ENCODE measurements at regions of chr3 and their contacts with region 1.

Region 1: GRCh38 chr3:56248021-56248420 is 220.2 kb downstream of the ERC2 start:
- DNase-seq: no peak
- H3K4me3 ChIP-seq: no peak overlapping the region
- H3K27ac ChIP-seq: no peak overlapping the region
- H3K4me1 ChIP-seq: no peaks in the 10 kb centered on the region
- H3K27me3 ChIP-seq: no peaks in the 10 kb centered on the region
- CTCF ChIP-seq: no peak

Region 2: DNA sequence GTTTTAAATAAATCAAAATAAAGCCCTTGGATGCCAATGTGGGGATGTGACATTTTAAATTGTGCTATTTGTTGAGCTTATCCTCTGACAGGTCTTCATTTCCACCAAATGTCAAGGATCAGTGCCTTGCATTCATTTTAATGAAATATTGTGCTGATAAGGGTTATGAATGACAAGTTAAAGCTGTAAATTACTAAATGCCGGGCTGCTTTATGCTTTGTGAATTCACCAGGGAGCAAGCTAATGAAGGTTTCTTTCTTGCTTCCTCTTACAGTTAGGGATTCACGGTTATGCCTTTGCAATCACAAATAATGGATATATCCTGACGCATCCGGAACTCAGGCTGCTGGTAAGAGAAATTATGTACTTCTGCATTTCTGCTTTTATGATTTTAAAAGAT is 1401.9 kb before region 1 on chr3:
- intact Hi-C with region 1: loop called (anchors 10 kb)
- DNase-seq: no peak
- H3K4me3 ChIP-seq: no peak overlapping the region
- H3K27ac ChIP-seq: no peak overlapping the region
- H3K4me1 ChIP-seq: peaks cover 0 to 2% (median 0%) of the 10 kb centered on the region in 3 donors
- H3K27me3 ChIP-seq: no peaks in the 10 kb centered on the region
- CTCF ChIP-seq: no peak

Region 3: DNA sequence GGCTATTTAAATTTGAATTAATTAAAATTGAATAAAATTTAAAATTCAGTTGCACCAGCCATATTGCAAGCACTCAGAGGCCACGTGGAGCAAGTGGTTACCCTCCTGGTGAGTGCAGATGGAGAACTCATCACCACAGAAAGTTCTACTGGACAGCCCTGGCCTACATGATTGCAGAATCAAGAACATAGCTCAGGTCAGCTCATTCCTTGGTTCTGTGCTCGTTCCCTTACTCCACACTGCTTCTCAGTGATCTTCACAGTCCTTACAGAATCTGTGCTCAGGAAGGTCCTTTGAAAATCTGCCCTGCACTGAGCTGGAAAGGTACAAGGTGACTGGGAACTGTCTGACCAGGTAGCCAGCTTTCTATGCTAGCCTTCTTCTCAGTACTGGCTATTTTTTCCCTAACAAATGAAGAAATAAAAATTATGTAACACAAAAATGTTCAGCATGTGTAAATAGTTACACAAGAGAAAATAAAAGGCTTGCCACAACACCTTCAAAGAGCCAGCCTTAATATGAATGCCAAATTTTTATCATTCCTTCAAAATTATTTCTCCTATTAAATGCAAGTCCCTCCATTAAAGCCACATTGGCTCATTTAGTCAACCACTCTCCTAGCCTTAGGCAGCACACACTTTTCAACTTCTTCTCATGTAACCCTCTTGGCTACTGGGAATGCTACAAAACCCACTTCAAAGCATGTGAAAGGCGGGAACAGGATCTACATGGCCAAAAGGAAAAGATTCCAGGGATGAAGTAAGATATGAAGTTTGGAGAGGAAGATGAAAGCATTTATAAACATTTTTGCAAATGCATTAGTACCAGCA is 434.5 kb before region 1 on chr3:
- intact Hi-C with region 1: no loop called
- DNase-seq: no peak
- H3K4me3 ChIP-seq: no peak overlapping the region
- H3K27ac ChIP-seq: no peak overlapping the region
- H3K4me1 ChIP-seq: no peaks in the 10 kb centered on the region
- H3K27me3 ChIP-seq: no peaks in the 10 kb centered on the region
- CTCF ChIP-seq: no peak

Region 4: GRCh38 chr3:56005196-56005805 is 242.7 kb before region 1 on chr3:
- intact Hi-C with region 1: no loop called
- DNase-seq: no peak
- H3K4me3 ChIP-seq: no peak overlapping the region
- H3K27ac ChIP-seq: no peak overlapping the region
- H3K4me1 ChIP-seq: no peaks in the 10 kb centered on the region
- H3K27me3 ChIP-seq: no peaks in the 10 kb centered on the region
- CTCF ChIP-seq: no peak

Measured in kidney (tissue), 22 donors.